RWPE1 (cell line): ENCODE measurements at regions of chr1 and their contacts with region 1.

Region 1: GRCh38 chr1:2174348-2175054 is 20.1 kb downstream of the FAAP20 start:
- DNase-seq: peak; percentile 87
- H3K27ac ChIP-seq: peak overlapping the region; percentile 19
- CTCF ChIP-seq: peak; percentile 95

Region 2: GRCh38 chr1:2132222-2133038 is 42.1 kb before region 1 on chr1:
- CTCF ChIA-PET with region 1: interaction called, 19 read pairs
- POLR2A ChIA-PET with region 1: no interaction called
- DNase-seq: peak; percentile 68
- H3K27ac ChIP-seq: peak overlapping the region; percentile 65
- CTCF ChIP-seq: no peak

Region 3: DNA sequence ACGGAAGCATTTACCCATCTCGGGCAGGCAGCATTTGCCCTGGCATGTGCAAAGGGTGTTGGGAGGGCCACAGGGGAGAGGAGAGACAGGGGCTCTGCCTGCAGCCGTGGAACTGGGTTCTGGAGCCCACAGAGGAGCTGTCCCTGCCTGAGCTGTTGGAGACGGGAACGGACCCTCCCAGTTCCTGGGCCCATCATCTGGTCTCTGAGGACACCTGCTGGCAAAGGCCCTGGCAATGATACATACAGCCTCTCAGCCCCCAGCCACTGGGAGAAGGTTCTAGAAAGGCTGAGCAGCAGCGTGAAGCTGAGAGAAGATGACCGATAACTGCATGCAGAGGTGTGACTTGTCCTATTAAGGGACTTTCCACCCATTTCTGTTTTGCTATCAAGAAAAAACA is 11.3 kb before region 1 on chr1:
- CTCF ChIA-PET with region 1: interaction called, 29 read pairs
- POLR2A ChIA-PET with region 1: no interaction called
- DNase-seq: no peak
- H3K27ac ChIP-seq: no peak overlapping the region
- CTCF ChIP-seq: no peak

Region 4: DNA sequence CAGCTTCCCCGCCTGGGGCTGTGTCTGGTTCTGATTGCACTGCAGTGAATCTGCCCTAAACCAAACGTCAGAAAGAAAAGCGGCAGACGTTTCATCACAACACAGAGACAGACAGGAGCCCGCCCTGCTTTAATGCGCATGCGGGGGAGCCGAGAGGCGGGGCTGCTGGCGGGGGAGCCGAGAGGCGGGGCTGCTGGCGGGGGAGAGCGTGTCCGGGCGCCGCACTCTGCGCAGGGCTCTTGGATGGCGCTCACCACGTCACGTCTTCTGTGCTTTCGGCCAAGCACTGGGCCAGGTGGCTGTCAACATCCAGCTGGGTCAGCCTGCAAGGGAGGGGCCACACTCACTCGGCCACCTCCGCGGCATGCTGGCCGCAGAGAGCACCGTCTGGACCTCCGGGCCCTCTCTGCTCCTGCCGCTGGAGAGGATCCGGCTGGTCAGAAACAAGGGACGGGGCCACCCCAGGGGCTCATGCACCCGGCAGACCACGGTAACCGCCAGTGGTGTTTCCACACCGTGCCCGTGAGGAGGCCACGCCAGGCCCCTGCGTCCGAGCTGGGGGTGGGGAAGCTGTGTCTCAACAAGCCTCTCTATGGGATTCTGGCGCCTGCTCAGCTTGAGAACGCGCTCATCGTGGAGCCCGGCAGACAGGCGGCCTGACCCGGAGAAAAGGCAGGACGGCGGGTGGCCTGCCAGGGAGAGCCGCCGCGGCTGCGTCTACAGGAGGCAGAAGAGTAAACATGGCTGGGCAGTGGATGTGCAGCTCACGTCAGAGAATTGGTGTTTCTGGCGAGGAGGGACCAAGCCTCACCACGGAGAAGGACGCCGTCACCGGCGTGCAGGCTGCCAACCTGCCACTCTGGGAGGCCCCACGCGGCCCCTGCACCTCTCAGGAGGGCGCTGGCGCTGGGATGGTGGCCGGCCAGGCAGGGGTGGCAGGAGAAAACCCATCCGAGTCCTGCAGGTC is 15.2 kb after region 1 on chr1:
- CTCF ChIA-PET with region 1: interaction called, 30 read pairs
- POLR2A ChIA-PET with region 1: no interaction called
- DNase-seq: peak; percentile 93
- H3K27ac ChIP-seq: peak overlapping the region; percentile 97
- CTCF ChIP-seq: no peak